Heart left ventricle (tissue), 16 donors: ENCODE measurements at regions of chr1 and their contacts with region 1.

Region 1: GRCh38 chr1:168403140-168403539 is 122.5 kb downstream of the TBX19 start:
- DNase-seq: no peak
- ATAC-seq: no peak
- H3K4me3 ChIP-seq: no peak overlapping the region
- H3K27ac ChIP-seq: no peak overlapping the region
- H3K4me1 ChIP-seq: peaks cover 0 to 7% (median 0%) of the 10 kb centered on the region in 12 donors
- H3K27me3 ChIP-seq: peaks cover 0 to 6% (median 0%) of the 10 kb centered on the region in 9 donors
- CTCF ChIP-seq: no peak
- POLR2A ChIP-seq: no peak

Region 2: DNA sequence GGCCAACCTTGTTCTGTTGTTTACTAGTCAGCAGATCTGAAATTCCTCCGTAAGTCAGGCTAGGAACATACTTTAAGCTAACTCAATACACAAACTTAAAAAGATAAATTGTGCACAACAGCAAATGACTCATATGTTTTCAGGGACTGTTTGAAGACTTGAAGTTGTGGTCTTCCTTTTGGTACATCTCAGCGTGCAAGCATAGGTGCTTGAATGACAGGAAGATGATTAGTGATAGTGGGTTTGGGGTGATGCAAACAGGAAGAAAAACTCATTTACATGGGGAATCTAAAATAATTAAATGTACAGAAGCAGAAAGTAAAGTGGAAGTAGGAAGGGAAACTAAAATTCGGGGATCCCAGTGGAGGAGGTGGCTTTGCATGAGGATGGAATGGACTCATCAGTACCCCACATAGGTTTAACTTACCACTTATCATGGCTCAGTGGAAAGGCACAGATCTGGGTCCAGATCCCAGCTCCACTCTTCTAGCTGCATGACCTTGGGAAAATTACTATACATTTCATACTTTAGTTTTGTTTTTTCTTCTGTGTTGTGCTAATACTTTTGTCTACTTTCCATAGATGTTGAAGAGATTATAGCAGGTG is 18.4 kb after region 1 on chr1:
- intact Hi-C with region 1: loop called in 1 of 10 experiments (anchors 1 kb)
- DNase-seq: no peak
- ATAC-seq: no peak
- H3K4me3 ChIP-seq: no peak overlapping the region
- H3K27ac ChIP-seq: peak overlapping the region in 1 of 12 donors; percentile 54
- H3K4me1 ChIP-seq: peaks cover 0 to 6% (median under 1%) of the 10 kb centered on the region in 12 donors
- H3K27me3 ChIP-seq: no peaks in the 10 kb centered on the region
- CTCF ChIP-seq: no peak
- POLR2A ChIP-seq: no peak

Region 3: DNA sequence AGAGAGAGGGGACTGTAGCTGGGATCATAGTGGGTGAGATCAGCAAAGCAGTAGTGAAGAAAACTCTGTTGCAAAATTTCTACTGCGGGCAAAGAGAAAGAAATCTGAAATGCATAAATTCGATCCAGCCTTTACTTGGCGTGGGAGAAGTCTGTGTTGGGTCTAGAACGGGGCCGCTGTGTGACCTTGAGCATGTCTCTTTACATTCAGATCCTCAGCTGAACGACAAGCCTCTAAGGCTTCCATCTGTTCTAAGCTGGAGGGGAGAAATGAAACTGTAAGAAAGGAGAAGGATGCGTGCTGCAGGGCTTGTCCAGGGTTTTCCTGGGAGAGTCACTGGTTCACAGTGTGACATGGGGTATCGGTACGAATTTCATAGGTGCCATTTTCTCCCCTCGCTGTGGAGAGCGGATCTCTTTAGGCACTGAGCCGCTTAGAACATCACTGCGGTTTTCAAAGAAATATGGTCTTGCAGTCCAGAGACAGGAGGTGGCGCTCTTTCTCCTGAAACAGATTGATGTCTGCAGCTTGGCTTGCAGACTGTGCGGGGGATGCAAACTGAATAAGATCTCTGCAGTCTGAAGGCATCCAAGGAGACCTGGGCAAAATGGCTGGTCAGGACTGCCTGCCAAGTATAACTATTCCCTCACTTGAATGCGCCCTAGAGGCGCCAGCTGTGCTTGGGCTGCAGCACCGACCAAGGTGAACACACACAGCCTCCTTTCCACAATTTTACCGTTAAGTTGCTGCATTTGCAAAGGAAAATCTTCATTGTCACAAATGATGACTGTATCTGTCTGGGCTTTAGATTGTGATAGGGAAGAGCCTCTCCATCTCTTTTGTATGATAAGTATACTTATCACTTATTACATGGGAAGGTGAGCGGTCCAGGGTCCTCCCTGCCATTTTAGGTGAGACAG is 36.6 kb after region 1 on chr1:
- intact Hi-C with region 1: no loop called
- DNase-seq: peak; percentile 68 to 82 (median 73)
- ATAC-seq: peak; percentile 91 to 96 (median 92)
- H3K4me3 ChIP-seq: peak overlapping the region in 9 of 12 donors; percentile 12 to 47 (median 30)
- H3K27ac ChIP-seq: no peak overlapping the region
- H3K4me1 ChIP-seq: peaks cover 0 to 12% (median 2%) of the 10 kb centered on the region in 12 donors
- H3K27me3 ChIP-seq: no peaks in the 10 kb centered on the region
- CTCF ChIP-seq: peak; percentile 48 to 81 (median 70)
- POLR2A ChIP-seq: no peak